ENCODE measurements at regions of chrX and their contacts with region 1.

Region 1: DNA sequence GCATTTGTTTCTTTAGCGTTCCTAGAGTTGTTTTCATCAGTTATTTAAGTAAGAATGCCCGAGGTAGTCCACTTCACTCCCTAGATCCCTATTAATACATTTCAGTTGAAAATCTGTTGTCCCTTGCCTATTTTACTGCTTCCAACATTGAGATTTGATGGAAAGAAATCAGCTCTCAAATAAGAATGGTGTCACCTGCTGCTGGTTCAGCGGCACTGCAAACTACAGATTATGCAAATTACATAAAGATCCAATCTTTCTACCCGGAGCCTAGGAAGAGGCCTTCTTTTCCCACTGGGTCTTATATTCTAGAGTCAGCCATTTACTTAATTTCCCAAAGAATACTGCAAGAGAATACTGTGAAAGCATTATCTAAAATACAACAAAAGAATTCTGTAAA is 597.6 kb upstream of the MAGEB2 start:
- DNase-seq: peak in 1 of 2 experiments; percentile 1
- H3K4me3 ChIP-seq: no peak overlapping the region
- H3K4me3 Mint-ChIP-seq: no peak overlapping the region
- H3K27ac Mint-ChIP-seq: no peak overlapping the region
- H3K4me1 ChIP-seq: no peaks in the 10 kb centered on the region
- H3K4me1 Mint-ChIP-seq: no peaks in the 10 kb centered on the region
- H3K27me3 ChIP-seq: no peaks in the 10 kb centered on the region
- H3K27me3 Mint-ChIP-seq: no peaks in the 10 kb centered on the region
- CTCF ChIP-seq: peak in 1 of 2 experiments; percentile 18

Region 2: DNA sequence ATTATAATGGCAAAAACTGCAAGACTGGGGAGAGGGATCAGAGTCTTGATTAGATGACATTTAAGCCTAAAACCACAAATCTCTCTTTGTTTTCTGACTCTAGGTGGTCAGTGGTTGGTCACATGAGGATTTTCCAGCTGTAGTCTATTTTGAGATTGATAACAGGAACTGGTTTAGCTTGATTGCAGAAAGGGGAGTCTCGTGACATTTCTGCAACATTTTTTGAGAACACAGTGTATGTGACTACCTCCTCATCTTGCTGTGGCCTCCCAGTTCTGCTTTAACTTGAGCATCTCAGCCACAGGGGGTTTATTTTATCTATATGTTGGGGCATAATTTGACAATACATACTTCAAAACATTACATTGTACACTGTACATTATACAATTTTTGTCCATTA is 128.8 kb before region 1 on chrX:
- CTCF ChIA-PET with region 1: no interaction called
- POLR2A ChIA-PET with region 1: no interaction called
- intact Hi-C with region 1: loop called (anchors 10 kb)
- DNase-seq: peak in 1 of 2 experiments; percentile 0
- H3K4me3 ChIP-seq: no peak overlapping the region
- H3K4me3 Mint-ChIP-seq: peak overlapping the region; percentile 13
- H3K27ac Mint-ChIP-seq: peak overlapping the region; percentile 73
- H3K4me1 ChIP-seq: 0 out of 2 replicates have a peak, but pooled peaks cover 4% of the 10 kb centered on the region
- H3K4me1 Mint-ChIP-seq: peaks cover 11% of the 10 kb centered on the region
- H3K27me3 ChIP-seq: no peaks in the 10 kb centered on the region
- H3K27me3 Mint-ChIP-seq: no peaks in the 10 kb centered on the region
- CTCF ChIP-seq: no peak

Region 3: GRCh38 chrX:29687687-29688086 is 70.0 kb after region 1 on chrX:
- CTCF ChIA-PET with region 1: no interaction called
- POLR2A ChIA-PET with region 1: no interaction called
- intact Hi-C with region 1: no loop called
- DNase-seq: no peak
- H3K4me3 ChIP-seq: no peak overlapping the region
- H3K4me3 Mint-ChIP-seq: no peak overlapping the region
- H3K27ac Mint-ChIP-seq: no peak overlapping the region
- H3K4me1 ChIP-seq: no peaks in the 10 kb centered on the region
- H3K4me1 Mint-ChIP-seq: no peaks in the 10 kb centered on the region
- H3K27me3 ChIP-seq: no peaks in the 10 kb centered on the region
- H3K27me3 Mint-ChIP-seq: no peaks in the 10 kb centered on the region
- CTCF ChIP-seq: no peak